ENCODE measurements at regions of chr2 and their contacts with region 1.

Region 1: DNA sequence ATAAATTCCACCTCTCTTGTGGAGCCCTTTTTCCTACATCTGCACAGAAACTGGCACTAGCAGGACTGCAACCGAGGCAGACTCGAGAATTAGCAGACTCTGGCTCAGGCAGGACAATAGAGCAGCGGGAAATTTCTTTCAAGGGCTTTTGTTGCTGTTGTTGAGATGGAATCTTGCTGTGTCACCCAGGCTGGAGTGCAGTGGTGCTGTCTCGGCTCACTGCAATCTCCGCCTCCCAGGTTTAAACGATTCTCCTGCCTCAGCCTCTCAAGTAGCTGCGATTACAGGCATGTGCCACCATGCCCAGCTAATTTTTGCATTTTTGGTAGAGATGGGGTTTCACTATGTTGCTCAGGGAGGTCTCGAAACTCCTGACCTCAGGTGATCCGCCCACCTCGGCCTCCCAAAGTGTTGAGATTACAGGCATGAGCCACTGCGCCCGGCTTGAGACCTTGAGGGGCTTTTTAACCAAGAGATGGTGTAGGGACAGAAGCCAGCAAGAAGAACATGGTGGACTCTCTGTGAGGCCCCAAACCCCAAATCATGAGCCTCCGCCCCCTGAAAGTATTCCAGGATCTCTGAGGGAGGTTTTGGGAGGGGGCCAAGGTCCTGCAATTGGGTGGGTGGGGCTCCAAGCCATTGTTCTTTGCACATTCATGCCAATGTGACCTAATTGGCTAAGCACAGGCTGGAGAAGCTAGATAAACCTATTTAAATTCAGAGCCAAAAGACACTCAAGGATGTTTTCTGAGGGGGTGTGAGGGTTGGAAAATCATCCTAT is 68.4 kb upstream of the MSH2 start:
- DNase-seq: no peak

Region 2: GRCh38 chr2:47388888-47389287 is 54.3 kb after region 1 on chr2:
- intact Hi-C with region 1: loop called (anchors 1 kb)
- DNase-seq: no peak

Measured in cardiac septum (tissue), 1 donor.